Gastrocnemius medialis (tissue), 4 donors: ENCODE measurements at regions of chr7 and their contacts with region 1.

Region 1: DNA sequence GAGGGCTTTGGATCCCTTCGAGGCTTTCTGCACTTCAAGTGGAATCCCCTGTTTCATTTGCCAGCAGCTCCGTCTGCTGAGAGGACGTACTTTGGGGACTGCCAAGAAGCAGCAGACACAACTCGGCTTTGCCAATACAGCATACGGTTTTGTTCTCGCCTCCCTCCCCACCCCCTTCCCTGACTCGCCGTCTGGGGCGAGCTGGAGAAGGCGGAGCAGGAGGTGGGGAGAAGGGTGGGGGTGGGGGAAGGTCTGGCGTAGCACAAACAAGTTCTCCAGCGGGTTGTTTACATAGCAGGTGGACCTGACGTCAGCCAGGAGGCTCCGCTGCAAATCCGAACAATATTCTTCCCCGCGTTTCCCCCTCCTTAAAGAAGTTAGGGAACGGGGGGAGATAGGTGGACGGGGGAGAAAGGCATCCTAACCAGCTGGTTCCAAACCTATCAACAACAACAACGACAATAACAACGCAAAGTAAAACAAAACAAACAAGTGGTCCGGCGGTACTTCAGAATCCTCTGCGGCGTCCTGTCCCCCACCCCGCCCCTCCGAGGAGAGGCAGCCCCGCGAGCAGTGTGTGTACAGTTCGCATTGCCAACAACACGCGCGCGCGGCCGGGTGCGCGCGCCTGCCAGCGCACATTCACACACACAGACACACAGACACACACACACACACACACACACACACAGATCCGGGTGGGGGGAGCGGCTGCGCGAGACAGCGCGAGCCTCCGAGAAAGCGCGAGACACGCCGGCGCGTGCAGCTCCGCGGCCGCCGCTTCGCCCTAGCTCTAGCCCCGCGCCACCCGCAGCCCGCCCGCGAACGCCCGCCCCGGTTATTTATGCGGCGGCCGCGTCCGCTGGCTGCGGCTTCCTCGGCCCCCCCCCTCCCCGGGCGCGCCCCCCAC is 167.0 kb upstream of the PPP1R3A start:
- DNase-seq: peak; percentile 93 to 95
- ATAC-seq: peak; percentile 72
- H3K4me3 ChIP-seq: peak overlapping the region; percentile 63 to 84 (median 80)
- H3K27ac ChIP-seq: peak overlapping the region; percentile 92 to 99 (median 98)
- H3K4me1 ChIP-seq: peaks cover 30 to 43% of the 10 kb centered on the region in 2 donors
- H3K27me3 ChIP-seq: peaks cover 0 to 6% (median 0%) of the 10 kb centered on the region in 3 donors
- CTCF ChIP-seq: peak in 1 of 5 experiments; percentile 10
- POLR2A ChIP-seq: peak; percentile 81

Region 2: DNA sequence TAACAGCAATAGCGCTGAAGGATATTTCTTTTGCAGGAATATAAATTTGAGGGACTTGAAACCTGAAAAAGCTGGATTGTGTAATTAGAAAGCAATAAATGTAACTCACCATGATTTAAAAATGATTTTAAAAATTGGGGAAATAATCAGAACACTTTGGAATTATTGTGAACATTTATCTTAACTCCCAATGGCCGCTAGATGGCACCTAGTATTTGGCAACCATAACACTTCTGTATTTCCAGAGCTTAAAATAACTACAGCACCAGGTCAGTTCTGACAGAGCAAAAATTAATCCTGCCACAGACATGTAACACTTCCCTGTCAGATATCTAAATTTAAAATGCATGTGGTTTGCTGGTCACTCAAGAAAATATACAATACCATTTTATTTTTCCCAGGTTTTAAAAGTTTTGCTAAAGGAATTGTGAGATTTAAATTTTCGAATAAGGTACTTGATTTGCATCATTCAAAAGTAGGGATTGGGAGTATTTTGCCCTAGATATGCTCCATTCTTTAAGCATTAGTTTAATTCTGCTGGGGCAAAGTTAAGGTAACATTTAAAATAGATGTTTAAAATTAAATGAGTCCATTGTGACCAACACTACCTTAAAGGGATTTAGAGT is 311.6 kb before region 1 on chr7:
- in situ Hi-C with region 1: no loop called
- intact Hi-C with region 1: loop called (anchors 10 kb)
- DNase-seq: peak; percentile 34 to 49
- ATAC-seq: peak; percentile 100
- H3K4me3 ChIP-seq: peak overlapping the region in 2 of 4 donors; percentile 6 to 18
- H3K27ac ChIP-seq: peak overlapping the region; percentile 72 to 82 (median 74)
- H3K4me1 ChIP-seq: peaks cover 8 to 20% of the 10 kb centered on the region in 2 donors
- H3K27me3 ChIP-seq: no peaks in the 10 kb centered on the region
- CTCF ChIP-seq: peak; percentile 63 to 74 (median 67)
- POLR2A ChIP-seq: no peak

Region 3: DNA sequence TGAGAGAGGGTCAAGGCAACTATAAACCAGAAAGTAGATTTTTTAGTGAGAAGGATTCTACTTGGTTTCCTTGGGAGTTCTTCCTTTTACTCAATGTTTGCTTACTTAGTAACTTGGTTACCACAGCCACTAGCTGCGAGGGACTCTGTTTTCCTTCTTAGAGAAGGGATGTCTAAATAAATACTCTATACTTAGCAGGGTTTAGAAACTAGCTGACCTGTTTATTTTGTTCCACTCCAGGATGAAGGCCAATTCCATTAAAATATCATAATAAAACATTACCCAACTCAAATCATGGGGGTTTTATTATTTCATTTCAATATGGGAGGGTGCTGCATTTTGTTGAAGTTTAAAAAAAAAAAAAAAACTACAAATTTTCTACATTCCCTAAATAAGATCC is 254.3 kb before region 1 on chr7:
- in situ Hi-C with region 1: no loop called
- intact Hi-C with region 1: no loop called
- DNase-seq: no peak
- ATAC-seq: peak; percentile 84 to 86
- H3K4me3 ChIP-seq: peak overlapping the region in 2 of 4 donors; percentile 1 to 12
- H3K27ac ChIP-seq: peak overlapping the region; percentile 39 to 66 (median 61)
- H3K4me1 ChIP-seq: peaks cover 26 to 41% of the 10 kb centered on the region in 2 donors
- H3K27me3 ChIP-seq: no peaks in the 10 kb centered on the region
- CTCF ChIP-seq: no peak
- POLR2A ChIP-seq: no peak

Region 4: GRCh38 chr7:114405427-114405826 is 319.6 kb after region 1 on chr7:
- in situ Hi-C with region 1: loop called in 3 of 4 experiments (anchors 10 to 25 kb)
- intact Hi-C with region 1: no loop called
- DNase-seq: no peak
- ATAC-seq: peak; percentile 50 to 90
- H3K4me3 ChIP-seq: no peak overlapping the region
- H3K27ac ChIP-seq: no peak overlapping the region
- H3K4me1 ChIP-seq: no peaks in the 10 kb centered on the region
- H3K27me3 ChIP-seq: no peaks in the 10 kb centered on the region
- CTCF ChIP-seq: peak; percentile 25 to 83 (median 44)
- POLR2A ChIP-seq: no peak

Region 5: DNA sequence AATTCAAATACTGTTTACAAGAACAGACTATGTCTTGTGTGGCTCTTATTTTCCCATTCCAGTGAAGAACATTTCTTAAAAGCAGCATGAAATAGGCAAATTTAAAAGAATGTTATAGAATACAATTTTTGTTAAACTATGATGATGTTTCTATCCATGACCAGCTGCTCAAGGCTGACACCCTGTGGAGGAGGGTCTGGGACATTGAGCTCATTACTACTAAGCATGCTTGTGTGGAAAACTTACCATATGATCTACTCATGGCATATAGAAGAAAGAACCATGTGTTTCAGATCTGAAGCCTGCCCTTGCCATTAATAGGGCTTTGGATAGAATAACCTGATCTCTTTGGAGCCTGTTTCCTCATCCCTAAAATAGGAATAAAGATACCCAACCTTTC is 453.7 kb after region 1 on chr7:
- in situ Hi-C with region 1: loop called in 2 of 4 experiments (anchors 25 kb)
- intact Hi-C with region 1: no loop called
- DNase-seq: no peak
- ATAC-seq: no peak
- H3K4me3 ChIP-seq: no peak overlapping the region
- H3K27ac ChIP-seq: no peak overlapping the region
- H3K4me1 ChIP-seq: no peaks in the 10 kb centered on the region
- H3K27me3 ChIP-seq: no peaks in the 10 kb centered on the region
- CTCF ChIP-seq: peak in 2 of 5 experiments; percentile 31 to 46
- POLR2A ChIP-seq: no peak

Region 6: DNA sequence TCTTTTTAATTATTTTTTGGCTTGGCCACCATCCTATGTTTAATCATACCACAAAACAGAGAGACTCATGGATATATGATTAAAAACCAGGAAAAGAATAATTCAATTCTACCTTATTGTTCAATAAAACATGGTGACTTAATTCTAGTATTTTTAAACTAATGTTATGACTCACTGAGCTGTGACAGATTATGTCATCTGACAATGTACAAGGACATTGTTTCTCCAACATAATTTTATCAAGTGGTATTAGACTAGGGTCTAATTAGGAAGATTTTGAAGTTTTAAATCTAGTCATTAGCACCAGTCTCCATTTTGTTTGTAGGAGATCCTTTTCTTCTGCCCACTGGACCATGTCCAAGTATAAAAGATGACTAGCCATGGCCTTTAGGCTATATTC is 636.7 kb after region 1 on chr7:
- in situ Hi-C with region 1: no loop called
- intact Hi-C with region 1: no loop called
- DNase-seq: no peak
- ATAC-seq: no peak
- H3K4me3 ChIP-seq: no peak overlapping the region
- H3K27ac ChIP-seq: no peak overlapping the region
- H3K4me1 ChIP-seq: no peaks in the 10 kb centered on the region
- H3K27me3 ChIP-seq: no peaks in the 10 kb centered on the region
- CTCF ChIP-seq: no peak
- POLR2A ChIP-seq: no peak